ENCODE measurements at regions of chr17 and their contacts with region 1.

Region 1: GRCh38 chr17:4625181-4625617 is 16.3 kb downstream of the ALOX15 start:
- DNase-seq: no peak
- ATAC-seq: peak; percentile 38; the same call in 1 of the 2 replicates
- H3K4me3 Mint-ChIP-seq: no peak overlapping the region
- H3K27ac Mint-ChIP-seq: no peak overlapping the region
- H3K4me1 Mint-ChIP-seq: peaks cover 8% of the 10 kb centered on the region
- H3K27me3 Mint-ChIP-seq: no peaks in the 10 kb centered on the region
- CTCF ChIP-seq: no peak

Region 2: GRCh38 chr17:4492721-4493561 is 132.3 kb before region 1 on chr17:
- CTCF ChIA-PET with region 1: no interaction called
- POLR2A ChIA-PET with region 1: no interaction called
- DNase-seq: peak; percentile 91
- ATAC-seq: peak; percentile 97
- H3K4me3 Mint-ChIP-seq: no peak overlapping the region
- H3K27ac Mint-ChIP-seq: no peak overlapping the region
- H3K4me1 Mint-ChIP-seq: peaks cover 12% of the 10 kb centered on the region
- H3K27me3 Mint-ChIP-seq: peaks cover 30% of the 10 kb centered on the region
- CTCF ChIP-seq: no peak

Region 3: DNA sequence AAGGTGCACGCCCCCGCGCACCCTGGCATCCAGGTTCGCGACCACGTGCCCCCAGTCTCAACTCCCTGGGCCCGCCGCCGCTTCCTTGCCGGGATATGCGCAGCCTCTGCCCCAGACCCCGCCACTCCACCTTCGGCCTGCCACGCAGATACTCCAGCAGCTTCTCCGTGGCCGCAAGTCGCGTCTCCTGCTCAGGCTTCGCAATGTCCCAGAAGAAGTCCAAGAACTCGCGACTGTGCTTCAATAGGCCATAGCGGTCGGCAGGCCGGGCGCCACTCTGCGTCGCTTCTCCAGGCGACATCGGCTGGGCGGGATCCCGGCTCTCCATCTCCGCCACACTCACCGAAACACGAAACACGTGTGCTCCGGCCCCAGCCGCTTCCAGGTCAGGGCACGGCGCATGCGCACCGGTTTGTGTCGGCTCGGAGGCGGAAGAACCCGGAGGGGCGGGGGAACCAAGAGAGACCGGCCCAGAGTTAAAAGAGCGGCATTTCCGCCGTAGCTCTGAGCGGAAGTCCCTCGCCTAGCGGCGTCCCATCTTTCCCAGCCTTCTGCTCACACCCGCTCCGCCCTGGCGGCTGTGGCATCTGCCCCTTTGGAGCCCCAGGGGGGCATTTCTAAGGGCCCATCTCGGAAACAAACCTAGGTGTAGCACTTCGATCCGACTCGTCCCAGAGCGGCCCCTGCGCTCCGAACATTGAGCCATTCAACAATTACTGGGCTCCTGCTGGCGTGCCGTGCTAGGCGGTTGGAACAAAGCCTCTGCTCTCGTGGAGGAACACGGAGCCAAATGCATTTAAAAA is 70.0 kb before region 1 on chr17 and contains the start of gene MYBBP1A:
- CTCF ChIA-PET with region 1: interaction called, 10 read pairs
- POLR2A ChIA-PET with region 1: no interaction called
- DNase-seq: peak; percentile 94
- ATAC-seq: peak; percentile 90
- H3K4me3 Mint-ChIP-seq: peak within 1 kb of the TSS; percentile 78
- H3K27ac Mint-ChIP-seq: peak within 1 kb of the TSS; percentile 95
- H3K4me1 Mint-ChIP-seq: peaks cover 32% of the 10 kb centered on the region
- H3K27me3 Mint-ChIP-seq: peaks cover 2% of the 10 kb centered on the region; the same call in 1 of the 2 replicates
- CTCF ChIP-seq: no peak
- total RNA-seq, gene MYBBP1A: 108 to 163 TPM (median 118 TPM) in 3 replicates

Region 4: DNA sequence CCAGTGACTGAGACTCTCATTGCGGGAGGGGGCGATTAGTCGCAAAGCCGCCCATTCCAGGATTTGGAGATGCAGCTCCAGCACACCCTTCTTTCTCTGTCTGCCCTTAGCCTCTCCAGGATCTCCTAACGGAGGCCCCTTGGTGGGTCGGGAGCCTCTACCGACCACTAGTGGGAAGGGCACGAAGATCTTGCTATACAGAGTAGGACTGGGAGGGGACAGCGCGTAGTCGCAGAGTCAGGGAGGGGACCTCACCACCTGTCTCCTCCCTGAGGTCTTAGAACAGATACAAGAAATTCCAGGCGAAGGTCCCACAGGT is 41.5 kb before region 1 on chr17:
- CTCF ChIA-PET with region 1: interaction called, 11 read pairs
- POLR2A ChIA-PET with region 1: no interaction called
- DNase-seq: peak; percentile 60
- ATAC-seq: peak; percentile 76
- H3K4me3 Mint-ChIP-seq: peak overlapping the region; percentile 86
- H3K27ac Mint-ChIP-seq: no peak overlapping the region
- H3K4me1 Mint-ChIP-seq: peaks cover 22% of the 10 kb centered on the region
- H3K27me3 Mint-ChIP-seq: peaks cover 40% of the 10 kb centered on the region
- CTCF ChIP-seq: peak; percentile 24; the same call in 1 of the 2 replicates